Common myeloid progenitor, CD34-positive (primary cell): ENCODE measurements at regions of chr1 and their contacts with region 1.

Region 1: DNA sequence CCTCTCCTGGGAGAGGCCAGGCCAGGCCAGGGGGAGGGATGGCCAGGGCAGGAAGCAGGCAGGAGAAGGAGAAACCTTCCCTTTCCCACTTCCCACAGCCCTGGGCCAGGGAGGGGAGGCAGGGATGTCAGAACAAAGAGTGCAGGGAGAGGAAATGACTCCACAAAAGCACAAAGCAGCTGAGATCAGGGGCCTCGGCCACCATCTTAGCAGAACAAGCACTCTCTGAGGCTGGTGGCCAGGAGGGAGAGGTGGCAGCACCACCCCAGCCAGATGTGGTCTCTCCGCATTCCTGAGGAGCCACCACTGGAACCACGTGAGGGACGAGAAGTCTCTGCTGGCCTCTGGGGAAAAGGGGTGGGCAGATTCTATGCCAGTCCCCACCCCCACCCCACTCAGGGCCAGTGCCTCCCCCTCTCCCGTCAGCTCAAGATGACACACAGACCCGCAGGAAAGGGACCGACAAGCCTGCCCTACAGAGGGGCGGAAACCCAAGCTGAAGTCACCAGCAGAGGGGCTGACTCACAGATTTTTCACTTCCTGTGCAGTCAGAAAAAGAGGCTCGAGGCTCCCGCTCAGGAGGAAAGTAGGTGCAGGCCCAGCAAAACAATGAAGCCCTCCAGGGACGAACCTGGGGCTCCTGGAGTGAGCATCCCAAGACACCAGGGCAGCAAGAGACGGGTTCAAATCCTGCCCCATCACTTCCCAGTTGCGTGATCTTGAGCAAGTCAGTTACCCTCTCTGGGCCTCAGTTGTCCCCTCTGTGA is 24.1 kb upstream of the ALDH4A1 start:
- DNase-seq: peak; percentile 91 to 99 (median 98)
- H3K4me3 ChIP-seq: peak overlapping the region in 4 of 7 experiments; percentile 46 to 64 (median 62)
- H3K27ac ChIP-seq: peak overlapping the region; percentile 84 to 85
- H3K4me1 ChIP-seq: peaks cover 4 to 84% (median 79%) of the 10 kb centered on the region in 4 experiments
- H3K27me3 ChIP-seq: no peaks in the 10 kb centered on the region

Region 2: GRCh38 chr1:18597160-18598042 is 329.1 kb before region 1 on chr1:
- CTCF ChIA-PET with region 1: no interaction called
- POLR2A ChIA-PET with region 1: no interaction called
- DNase-seq: peak; percentile 44 to 56 (median 46)
- H3K4me3 ChIP-seq: no peak overlapping the region
- H3K27ac ChIP-seq: no peak overlapping the region
- H3K4me1 ChIP-seq: no peaks in the 10 kb centered on the region
- H3K27me3 ChIP-seq: peaks cover 4 to 66% (median 20%) of the 10 kb centered on the region in 5 experiments

Region 3: DNA sequence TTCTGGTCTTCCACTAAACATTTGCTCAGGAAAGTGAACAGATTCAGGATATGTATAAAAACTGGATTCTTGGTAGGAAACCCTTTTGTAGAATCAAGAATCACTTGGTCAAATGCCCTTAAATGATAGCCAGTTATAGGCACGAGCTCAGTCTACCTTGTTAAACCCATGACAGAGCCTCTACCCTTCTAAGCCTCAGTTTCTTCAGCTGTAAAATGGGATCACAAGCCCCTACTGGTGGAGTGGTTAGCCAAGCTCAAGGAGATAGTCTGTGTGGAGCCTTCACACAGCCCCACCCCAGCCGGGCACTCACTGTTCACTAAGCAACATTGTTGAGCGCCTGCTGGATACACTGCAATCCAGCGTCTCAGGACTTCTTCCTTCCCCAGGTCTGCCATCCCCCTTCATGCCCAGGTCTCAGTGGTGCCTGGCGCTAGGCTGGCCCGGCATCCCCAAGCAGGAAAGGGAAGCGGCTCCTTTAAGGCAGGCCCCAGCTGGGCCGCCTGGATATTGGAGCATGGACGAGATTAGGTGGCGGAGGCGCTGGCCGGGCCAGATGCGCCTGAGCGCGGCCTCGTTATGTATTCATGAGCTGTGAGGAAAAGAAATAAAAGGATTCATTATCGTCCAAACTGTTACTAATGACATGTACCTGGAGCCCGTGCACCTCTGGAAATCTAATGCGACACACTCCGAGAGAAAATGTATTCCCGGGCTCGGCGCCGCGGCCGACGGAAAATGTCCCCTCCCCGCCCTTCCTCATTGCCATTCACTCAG is 142.6 kb before region 1 on chr1:
- CTCF ChIA-PET with region 1: no interaction called
- POLR2A ChIA-PET with region 1: no interaction called
- DNase-seq: no peak
- H3K4me3 ChIP-seq: no peak overlapping the region
- H3K27ac ChIP-seq: no peak overlapping the region
- H3K4me1 ChIP-seq: no peaks in the 10 kb centered on the region
- H3K27me3 ChIP-seq: peaks cover 0 to 76% (median 24%) of the 10 kb centered on the region in 5 experiments

Region 4: DNA sequence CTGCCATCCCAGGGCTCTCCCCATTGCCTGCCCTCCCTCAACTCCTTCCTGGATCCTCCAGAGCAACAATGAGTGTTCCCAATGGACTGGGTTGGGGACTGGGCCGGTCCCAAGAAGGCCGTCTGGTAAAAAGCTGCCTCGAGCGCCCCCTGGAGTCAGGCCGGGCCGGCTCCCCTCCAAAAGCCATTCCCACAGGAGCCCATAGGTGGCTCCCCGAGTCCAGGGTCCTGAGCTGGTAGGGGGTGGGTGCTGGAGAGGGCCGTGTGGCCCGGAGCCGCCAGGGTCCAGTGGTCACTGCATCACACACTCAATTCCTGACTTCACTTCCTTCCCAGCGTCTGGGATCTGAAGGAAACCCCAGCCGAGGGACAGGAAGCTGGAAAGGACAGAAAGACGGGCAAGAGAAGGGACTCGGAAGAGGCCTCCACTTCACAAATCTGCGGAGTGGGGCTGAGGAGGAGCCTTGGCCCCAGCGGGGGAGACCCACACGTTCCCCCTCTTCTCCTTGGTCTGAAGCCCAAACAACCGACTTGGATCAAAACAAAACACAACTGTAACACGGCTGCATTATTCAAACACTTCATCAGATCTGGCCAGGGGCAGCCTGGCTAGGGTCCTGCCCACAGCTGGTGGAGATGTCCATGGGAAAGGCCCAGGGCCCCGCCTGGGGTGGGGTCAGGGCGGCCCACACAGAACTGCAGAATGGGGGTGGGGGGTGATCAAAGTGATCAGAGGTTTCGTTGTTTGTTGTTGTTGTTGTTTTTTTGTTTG is 13.2 kb before region 1 on chr1:
- CTCF ChIA-PET with region 1: interaction called, 199 read pairs
- POLR2A ChIA-PET with region 1: interaction called, 8 read pairs
- DNase-seq: peak; percentile 66 to 68 (median 67)
- H3K4me3 ChIP-seq: no peak overlapping the region
- H3K27ac ChIP-seq: no peak overlapping the region
- H3K4me1 ChIP-seq: peaks cover 0 to 30% (median 23%) of the 10 kb centered on the region in 4 experiments
- H3K27me3 ChIP-seq: no peaks in the 10 kb centered on the region

Region 5: GRCh38 chr1:18941221-18942141 is 15.0 kb after region 1 on chr1:
- CTCF ChIA-PET with region 1: interaction called, 20 read pairs
- POLR2A ChIA-PET with region 1: interaction called, 4 read pairs
- DNase-seq: no peak
- H3K4me3 ChIP-seq: no peak overlapping the region
- H3K27ac ChIP-seq: no peak overlapping the region
- H3K4me1 ChIP-seq: peaks cover 0 to 27% (median 17%) of the 10 kb centered on the region in 4 experiments
- H3K27me3 ChIP-seq: no peaks in the 10 kb centered on the region

Region 6: DNA sequence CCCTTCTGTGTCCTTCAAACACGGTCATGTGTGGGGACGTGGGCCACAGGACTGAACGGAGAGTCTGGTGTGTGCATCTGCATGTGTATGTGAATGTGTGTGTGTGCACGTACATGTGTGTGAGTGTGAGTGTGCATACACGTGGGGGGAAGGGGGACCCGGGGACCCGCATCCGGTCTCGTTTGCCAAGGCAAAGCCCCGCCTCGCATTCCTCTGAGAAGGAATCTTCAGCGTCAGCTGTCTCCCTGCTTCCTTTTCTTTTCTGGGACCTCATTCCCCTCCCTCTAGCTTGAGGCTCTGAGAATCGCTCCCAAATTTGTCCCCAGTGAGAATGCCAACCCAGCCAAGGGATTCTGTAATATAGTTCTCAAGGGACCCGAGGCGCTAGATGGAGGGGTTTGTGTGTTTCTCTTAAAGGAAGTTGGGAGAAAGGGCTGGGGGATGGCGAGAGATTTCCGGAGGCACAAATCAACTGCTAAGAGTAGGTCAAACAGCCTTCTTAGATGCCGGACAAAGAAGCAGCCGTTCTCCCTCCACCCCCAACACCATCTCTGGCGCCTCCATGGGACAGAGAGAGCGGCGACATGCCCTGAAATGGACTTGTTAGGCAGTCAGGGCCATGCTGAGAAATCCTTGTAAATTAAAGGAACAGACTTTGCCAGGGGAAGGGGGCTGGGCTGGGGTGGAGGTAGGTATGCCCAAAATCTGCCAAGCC is 23.3 kb after region 1 on chr1:
- CTCF ChIA-PET with region 1: interaction called, 86 read pairs
- POLR2A ChIA-PET with region 1: interaction called, 16 read pairs
- DNase-seq: peak in 2 of 3 donors; percentile 39 to 55
- H3K4me3 ChIP-seq: peak overlapping the region; percentile 28 to 76 (median 57)
- H3K27ac ChIP-seq: peak overlapping the region; percentile 96 to 98
- H3K4me1 ChIP-seq: peaks cover 16 to 97% (median 94%) of the 10 kb centered on the region in 4 experiments
- H3K27me3 ChIP-seq: no peaks in the 10 kb centered on the region

Region 7: GRCh38 chr1:18956369-18957135 is 30.1 kb after region 1 on chr1 and contains the start of gene IFFO2:
- CTCF ChIA-PET with region 1: interaction called, 86 read pairs
- POLR2A ChIA-PET with region 1: interaction called, 16 read pairs
- DNase-seq: peak; percentile 89 to 95 (median 94)
- H3K4me3 ChIP-seq: peak within 1 kb of the TSS; percentile 65 to 90 (median 76)
- H3K27ac ChIP-seq: no peak within 1 kb of the TSS
- H3K4me1 ChIP-seq: peaks cover 11 to 55% (median 55%) of the 10 kb centered on the region in 4 experiments
- H3K27me3 ChIP-seq: peaks cover 0 to 4% (median 2%) of the 10 kb centered on the region in 5 experiments

Region 8: GRCh38 chr1:18972531-18972930 is 46.0 kb after region 1 on chr1:
- CTCF ChIA-PET with region 1: interaction called, 18 read pairs
- POLR2A ChIA-PET with region 1: interaction called, 3 read pairs
- DNase-seq: peak; percentile 63 to 71 (median 70)
- H3K4me3 ChIP-seq: no peak overlapping the region
- H3K27ac ChIP-seq: no peak overlapping the region
- H3K4me1 ChIP-seq: peaks cover 4 to 11% (median 8%) of the 10 kb centered on the region in 4 experiments
- H3K27me3 ChIP-seq: no peaks in the 10 kb centered on the region

Region 9: GRCh38 chr1:19045898-19046889 is 119.7 kb after region 1 on chr1:
- CTCF ChIA-PET with region 1: no interaction called
- POLR2A ChIA-PET with region 1: no interaction called
- DNase-seq: no peak
- H3K4me3 ChIP-seq: no peak overlapping the region
- H3K27ac ChIP-seq: no peak overlapping the region
- H3K4me1 ChIP-seq: no peaks in the 10 kb centered on the region
- H3K27me3 ChIP-seq: peaks cover 2 to 32% (median 7%) of the 10 kb centered on the region in 5 experiments

Region 10: DNA sequence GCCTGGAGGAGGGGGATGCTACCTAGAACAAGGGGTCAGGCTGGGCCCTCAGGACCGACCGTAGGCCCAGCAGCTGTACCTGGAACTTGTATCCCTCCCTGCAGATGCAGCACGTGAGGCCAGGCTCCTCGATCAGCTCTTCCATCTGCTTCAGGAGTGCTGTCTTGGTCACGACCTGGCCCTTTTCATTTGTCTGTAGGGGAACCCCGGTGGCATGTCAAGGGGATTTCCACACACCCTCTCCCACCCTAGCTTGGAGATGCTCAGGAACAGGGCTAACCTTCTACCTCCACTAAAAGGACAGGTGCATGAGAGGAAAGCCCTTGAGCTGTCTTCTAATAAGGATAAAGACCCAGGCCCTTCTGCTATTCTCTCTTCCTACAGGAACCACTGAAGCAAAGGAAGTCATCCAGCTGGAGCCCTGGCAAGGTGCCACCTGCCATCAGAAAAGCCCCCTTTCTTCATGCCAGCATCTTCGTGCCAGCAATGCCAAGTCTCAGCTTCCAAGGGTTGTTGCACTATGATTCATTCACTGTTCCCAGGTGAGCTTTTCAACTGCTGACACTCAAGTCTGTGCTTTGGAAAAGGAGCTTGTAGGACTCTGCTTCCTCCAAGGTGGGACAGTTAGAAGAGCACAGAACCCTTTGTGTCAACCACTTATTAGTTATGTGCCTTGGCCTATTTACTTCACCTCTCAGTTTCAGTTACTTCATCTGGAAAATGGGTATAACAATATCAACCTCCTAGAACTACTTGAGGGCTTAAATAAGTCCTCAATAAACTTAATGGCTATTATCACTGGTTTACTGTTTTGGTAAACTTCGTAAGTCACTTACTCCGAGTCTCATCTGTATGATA is 161.5 kb after region 1 on chr1:
- CTCF ChIA-PET with region 1: no interaction called
- POLR2A ChIA-PET with region 1: no interaction called
- DNase-seq: peak in 2 of 3 donors; percentile 25 to 36
- H3K4me3 ChIP-seq: no peak overlapping the region
- H3K27ac ChIP-seq: no peak overlapping the region
- H3K4me1 ChIP-seq: no peaks in the 10 kb centered on the region
- H3K27me3 ChIP-seq: no peaks in the 10 kb centered on the region